Head of caudate nucleus (tissue), 42 donors: ENCODE measurements at regions of chr6 and their contacts with region 1.

Region 1: DNA sequence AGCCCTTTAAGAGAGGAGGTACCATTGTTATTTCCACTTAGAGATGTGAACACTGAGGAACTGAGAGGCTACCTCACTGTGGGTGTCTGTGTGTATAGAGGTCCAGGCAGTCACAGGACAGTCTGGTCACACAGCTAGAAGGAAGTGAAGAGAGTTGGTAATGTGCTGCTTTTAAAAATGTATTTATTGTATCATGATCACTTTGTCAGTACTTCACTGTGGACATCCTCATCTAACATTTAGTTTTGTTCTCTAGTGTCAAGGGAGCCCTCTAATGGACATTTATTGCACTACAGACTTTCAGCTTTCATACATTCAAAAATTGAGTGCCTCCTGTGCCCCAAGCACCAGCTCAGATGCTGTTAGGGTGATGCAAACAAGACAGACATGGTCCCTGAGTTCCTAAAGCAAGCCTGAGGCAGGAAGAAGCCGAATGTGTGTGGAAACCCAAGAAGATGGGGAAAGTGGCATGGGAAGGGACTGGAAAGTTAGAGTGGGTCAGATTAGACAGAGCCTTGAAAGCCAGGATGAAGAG is 123.0 kb downstream of the SLC16A10 start:
- DNase-seq: peak in 5 of 42 donors; percentile 5 to 50 (median 8)

Region 2: DNA sequence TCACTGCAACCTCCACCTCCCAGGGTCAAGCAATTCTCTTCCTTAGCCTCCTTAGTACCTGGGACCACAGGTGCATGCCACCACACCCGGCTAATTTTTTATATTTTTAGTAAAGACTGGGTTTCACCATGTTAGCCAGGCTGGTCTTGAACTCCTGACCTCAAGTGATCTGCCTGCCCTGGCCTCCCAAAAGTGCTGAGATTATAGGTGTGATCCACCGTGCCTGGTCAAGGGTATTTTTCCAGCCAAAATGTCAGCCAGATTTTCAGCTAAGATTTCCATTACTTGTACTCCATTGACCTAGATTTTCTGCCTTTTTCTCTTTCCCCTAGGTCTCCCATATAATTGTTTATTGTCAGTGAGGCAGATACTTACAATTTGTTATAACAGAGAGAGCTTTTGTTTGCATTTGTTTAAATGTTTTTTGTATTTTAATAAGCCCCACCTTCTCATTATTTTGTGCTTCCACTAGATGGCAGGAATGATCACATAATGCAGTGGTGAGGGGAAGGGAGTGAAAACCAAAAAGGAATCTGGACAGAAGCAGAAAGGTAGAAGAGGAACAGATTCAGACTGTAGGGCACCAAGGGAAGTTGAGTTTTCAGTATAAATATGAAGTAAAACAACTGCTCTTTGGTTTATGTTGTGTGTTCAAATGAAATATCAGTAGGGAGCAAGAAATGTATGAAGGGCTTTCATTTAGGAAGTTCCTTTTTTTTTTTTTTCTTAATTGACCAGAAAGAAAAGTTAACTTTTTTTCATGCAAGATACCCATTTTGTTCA is 198.7 kb before region 1 on chr6:
- intact Hi-C with region 1: loop called (anchors 10 kb)
- DNase-seq: peak in 4 of 42 donors; percentile 7 to 44 (median 14)